ENCODE measurements at regions of chr17 and their contacts with region 1.

Region 1: DNA sequence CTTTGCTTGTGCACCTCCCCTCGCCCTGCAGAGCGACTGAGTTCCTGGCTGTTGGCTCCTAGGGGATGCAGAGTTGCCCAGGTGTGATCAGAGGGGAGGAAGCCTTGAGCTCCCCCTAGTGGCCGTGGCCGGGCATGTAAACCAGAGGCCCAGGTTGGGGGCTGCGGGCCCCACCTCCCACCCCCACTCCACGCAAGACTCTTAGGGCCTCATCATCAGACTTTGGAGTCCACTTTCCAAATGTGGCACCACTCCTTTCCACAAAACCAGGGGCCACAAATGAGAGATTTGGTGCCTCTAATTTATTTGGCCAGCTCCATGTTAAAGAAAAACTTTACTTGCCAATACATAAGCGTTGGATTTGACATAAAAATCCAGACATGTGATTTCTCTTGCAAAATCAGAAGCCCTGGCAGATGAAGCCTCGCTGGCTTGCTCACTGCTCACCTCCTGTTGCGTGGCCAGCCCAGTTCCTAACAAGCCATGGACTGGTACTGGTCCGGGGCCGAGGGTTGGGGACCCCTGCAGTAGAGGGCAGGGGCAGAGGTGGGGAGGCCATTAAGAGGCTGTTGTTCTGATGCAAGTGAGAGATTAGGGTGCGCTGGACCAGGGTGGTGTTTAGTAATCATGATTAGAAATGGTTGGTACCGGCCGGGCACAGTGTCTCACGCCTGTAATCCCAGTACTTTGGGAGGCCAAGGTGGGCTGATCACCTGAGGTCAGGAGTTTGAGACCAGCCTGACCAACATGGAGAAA is 28.7 kb upstream of the GAS7 start:
- DNase-seq: peak; percentile 31
- H3K4me3 ChIP-seq: no peak overlapping the region
- H3K27ac ChIP-seq: no peak overlapping the region
- H3K4me1 ChIP-seq: no peaks in the 10 kb centered on the region
- H3K27me3 ChIP-seq: no peaks in the 10 kb centered on the region
- CTCF ChIP-seq: peak; percentile 66 to 81 (median 74)
- EP300 ChIP-seq: no peak
- POLR2A ChIP-seq: no peak

Region 2: GRCh38 chr17:9924735-9925191 is 302.3 kb before region 1 on chr17:
- in situ Hi-C with region 1: no loop called
- intact Hi-C with region 1: loop called (anchors 10 kb)
- DNase-seq: no peak
- H3K4me3 ChIP-seq: no peak overlapping the region
- H3K27ac ChIP-seq: no peak overlapping the region
- H3K4me1 ChIP-seq: peaks cover 0 to 3% (median 0%) of the 10 kb centered on the region in 4 donors
- H3K27me3 ChIP-seq: no peaks in the 10 kb centered on the region
- CTCF ChIP-seq: peak; percentile 70 to 89 (median 75)
- EP300 ChIP-seq: no peak
- POLR2A ChIP-seq: no peak

Region 3: DNA sequence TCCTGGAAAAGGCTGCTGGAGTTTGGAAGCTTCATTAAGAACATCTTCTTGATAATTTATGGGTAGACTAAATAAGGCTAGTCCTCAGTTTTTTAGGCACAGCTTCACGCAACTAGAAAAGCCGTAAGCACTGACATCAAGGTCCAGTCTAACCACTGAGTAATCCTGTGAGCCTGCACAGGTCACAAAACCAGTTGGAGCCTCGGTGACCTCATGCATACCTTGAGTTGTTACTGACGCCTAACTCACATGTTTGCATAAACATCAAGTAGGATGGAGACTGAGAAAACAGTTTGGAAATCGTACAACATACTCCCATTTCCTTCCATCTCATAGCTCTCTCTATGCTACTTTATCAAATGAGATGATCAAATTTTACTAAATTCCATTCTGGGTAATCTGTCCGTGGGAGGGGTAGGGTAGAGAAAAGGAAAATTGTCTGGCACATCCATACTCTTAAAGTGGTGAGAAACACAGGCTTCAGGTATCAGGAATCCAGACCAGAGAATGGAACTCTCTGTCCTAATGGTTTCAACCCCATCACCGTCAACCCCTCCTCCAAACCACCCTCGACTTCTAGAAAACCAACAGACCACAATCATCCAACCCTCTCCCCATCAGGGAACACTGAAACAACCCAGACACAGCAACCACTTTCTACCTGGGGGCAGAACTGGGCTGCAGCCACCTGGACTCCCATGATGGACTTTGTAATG is 258.0 kb before region 1 on chr17:
- in situ Hi-C with region 1: loop called (anchors 5 to 25 kb)
- intact Hi-C with region 1: no loop called
- DNase-seq: no peak
- H3K4me3 ChIP-seq: no peak overlapping the region
- H3K27ac ChIP-seq: no peak overlapping the region
- H3K4me1 ChIP-seq: peaks cover 0 to 8% (median 2%) of the 10 kb centered on the region in 4 donors
- H3K27me3 ChIP-seq: no peaks in the 10 kb centered on the region
- CTCF ChIP-seq: no peak
- EP300 ChIP-seq: no peak
- POLR2A ChIP-seq: no peak